ENCODE measurements at regions of chr1 and their contacts with region 1.

Region 1: DNA sequence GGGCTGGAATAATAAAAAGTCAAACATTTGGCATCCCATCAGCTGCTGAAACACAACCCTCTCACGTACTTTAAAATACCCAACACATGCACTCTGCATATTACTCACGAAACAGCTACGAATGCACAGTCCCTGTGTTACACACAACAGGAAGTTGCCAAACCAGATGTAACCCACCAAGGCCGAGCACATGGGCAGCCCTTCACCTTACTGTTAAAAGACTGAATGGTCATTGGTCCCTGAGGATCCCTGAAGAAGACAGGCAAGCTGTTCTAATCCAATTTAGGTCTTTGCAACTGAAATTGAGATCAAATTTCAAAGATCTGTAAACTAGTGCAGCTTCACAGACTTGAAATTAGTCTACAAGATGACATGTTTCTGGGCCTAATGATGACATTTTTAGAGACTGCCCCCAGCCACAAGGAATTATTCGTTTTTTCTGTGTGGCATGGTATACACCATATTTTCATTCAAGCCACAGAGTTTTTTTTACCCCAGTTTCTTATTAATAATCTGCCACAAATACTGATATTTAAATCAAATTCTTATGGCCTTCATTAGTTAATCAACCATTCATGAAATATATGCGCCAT is 25.6 kb upstream of the IER5 start:
- DNase-seq: no peak
- H3K4me3 ChIP-seq: no peak overlapping the region
- H3K27ac ChIP-seq: no peak overlapping the region
- H3K4me1 ChIP-seq: no peaks in the 10 kb centered on the region
- H3K27me3 ChIP-seq: no peaks in the 10 kb centered on the region
- CTCF ChIP-seq: no peak

Region 2: DNA sequence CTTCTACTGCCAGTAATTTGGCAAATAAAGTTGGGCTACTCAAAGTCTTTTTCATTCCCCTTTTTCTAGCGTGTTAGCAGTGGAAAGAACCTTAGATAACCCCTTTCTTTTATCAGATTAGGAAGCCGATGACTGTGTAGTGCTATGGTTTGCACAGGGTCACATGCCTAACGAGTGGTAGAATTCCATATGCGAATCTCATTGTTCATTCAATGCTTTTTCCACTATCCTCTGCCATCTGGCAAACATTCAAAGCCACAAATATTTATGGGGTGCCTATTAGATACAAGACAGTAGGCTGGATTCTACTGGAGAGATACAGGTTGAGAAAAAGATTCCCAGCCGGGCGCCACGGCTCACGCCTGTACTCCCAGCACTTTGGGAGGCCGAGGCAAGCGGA is 10.7 kb after region 1 on chr1:
- CTCF ChIA-PET with region 1: no interaction called
- POLR2A ChIA-PET with region 1: interaction called, 13 read pairs
- intact Hi-C with region 1: no loop called
- DNase-seq: peak; percentile 66 to 93
- H3K4me3 ChIP-seq: no peak overlapping the region
- H3K27ac ChIP-seq: no peak overlapping the region
- H3K4me1 ChIP-seq: peaks cover 32% of the 10 kb centered on the region
- H3K27me3 ChIP-seq: no peaks in the 10 kb centered on the region
- CTCF ChIP-seq: no peak

Region 3: GRCh38 chr1:181406989-181407388 is 344.1 kb after region 1 on chr1:
- CTCF ChIA-PET with region 1: no interaction called
- POLR2A ChIA-PET with region 1: no interaction called
- intact Hi-C with region 1: no loop called
- DNase-seq: no peak
- H3K4me3 ChIP-seq: no peak overlapping the region
- H3K27ac ChIP-seq: no peak overlapping the region
- H3K4me1 ChIP-seq: no peaks in the 10 kb centered on the region
- H3K27me3 ChIP-seq: peaks cover 50% of the 10 kb centered on the region
- CTCF ChIP-seq: no peak